HAP-1 (cell line): ENCODE measurements at regions of chr2 and their contacts with region 1.

Region 1: DNA sequence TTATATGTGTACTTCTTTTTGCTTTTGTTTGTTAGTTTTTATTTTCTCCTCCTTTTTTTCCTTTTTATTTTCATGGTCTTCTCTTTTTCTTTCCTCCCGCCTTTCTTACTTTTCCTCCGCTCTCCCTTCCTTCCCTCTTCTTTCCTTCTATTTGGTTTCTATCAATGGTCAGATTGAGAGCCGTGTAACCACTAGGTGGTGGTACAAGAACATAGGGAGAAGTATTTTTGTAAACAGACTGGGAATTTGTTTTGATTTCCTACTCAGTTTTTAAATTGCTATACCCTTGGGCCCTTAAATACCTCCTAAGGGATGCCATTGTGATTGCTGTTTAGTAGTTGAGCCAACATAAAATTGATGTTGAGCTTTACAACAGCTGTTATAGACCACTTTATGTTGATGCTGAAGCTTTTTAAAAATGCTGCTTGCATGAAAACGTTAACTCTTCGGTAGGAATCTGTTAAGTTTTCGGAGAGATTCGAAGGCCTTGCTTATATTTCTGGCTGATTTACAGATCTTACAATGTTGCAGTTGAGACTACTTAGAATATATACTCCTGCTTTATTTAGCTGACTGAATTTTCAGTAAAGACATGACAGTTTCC is 124.2 kb downstream of the UBE2E3 start:
- DNase-seq: peak; percentile 29 to 66
- H3K4me3 ChIP-seq: no peak overlapping the region
- H3K4me1 ChIP-seq: no peaks in the 10 kb centered on the region
- H3K27me3 ChIP-seq: no peaks in the 10 kb centered on the region

Region 2: GRCh38 chr2:180472133-180472532 is 632.5 kb before region 1 on chr2:
- in situ Hi-C with region 1: no loop called
- DNase-seq: no peak
- H3K4me3 ChIP-seq: no peak overlapping the region
- H3K4me1 ChIP-seq: no peaks in the 10 kb centered on the region
- H3K27me3 ChIP-seq: no peaks in the 10 kb centered on the region

Region 3: DNA sequence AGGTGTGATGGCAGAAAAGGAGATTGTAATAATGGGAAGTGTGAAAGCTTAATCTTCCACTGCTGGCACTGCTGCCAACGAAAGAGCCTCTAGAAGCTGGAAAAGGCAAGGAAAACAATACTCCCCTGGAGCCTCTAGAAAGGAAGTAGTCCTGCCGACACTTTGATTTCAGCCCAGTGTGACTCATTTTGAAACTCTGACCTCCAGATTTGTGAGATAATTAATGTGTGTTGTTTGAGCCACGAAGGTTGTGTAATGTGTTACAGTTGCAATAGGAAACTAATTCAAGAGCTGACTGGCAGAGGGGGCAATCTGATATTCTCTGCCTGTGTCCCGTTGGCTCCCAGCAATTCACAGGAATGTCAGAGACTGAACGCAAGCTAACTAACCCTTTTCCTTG is 343.4 kb before region 1 on chr2:
- in situ Hi-C with region 1: no loop called
- DNase-seq: no peak
- H3K4me3 ChIP-seq: no peak overlapping the region
- H3K4me1 ChIP-seq: peaks cover 25% of the 10 kb centered on the region
- H3K27me3 ChIP-seq: no peaks in the 10 kb centered on the region

Region 4: DNA sequence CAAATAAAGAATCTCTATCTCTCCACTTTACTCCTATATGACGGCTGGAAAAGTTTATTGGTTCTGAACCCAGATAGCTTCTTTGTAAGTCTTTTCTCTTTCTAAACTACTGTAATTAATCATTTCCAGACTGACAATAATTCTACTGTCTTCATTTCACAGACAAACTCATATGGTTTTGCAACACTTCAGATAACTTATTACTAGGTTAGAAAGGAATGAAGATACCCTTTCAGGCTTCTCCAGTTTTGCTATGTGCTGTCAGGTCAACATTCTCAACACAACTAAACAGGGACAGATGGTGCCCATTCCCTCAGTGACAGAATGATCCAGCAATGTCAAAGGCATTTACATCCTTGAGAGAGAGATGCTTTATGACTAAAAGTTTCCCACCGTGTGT is 154.1 kb after region 1 on chr2:
- in situ Hi-C with region 1: no loop called
- DNase-seq: no peak
- H3K4me3 ChIP-seq: no peak overlapping the region
- H3K4me1 ChIP-seq: no peaks in the 10 kb centered on the region; the same call in none of the 2 replicates
- H3K27me3 ChIP-seq: no peaks in the 10 kb centered on the region

Region 5: GRCh38 chr2:181457121-181457740 is 352.6 kb after region 1 on chr2 and contains the start of gene ITGA4:
- in situ Hi-C with region 1: loop called (anchors 25 kb)
- DNase-seq: peak; percentile 63 to 90
- H3K4me3 ChIP-seq: peak within 1 kb of the TSS; percentile 54
- H3K4me1 ChIP-seq: peaks cover 25% of the 10 kb centered on the region
- H3K27me3 ChIP-seq: no peaks in the 10 kb centered on the region